ENCODE measurements at regions of chr12 and their contacts with region 1.

Region 1: DNA sequence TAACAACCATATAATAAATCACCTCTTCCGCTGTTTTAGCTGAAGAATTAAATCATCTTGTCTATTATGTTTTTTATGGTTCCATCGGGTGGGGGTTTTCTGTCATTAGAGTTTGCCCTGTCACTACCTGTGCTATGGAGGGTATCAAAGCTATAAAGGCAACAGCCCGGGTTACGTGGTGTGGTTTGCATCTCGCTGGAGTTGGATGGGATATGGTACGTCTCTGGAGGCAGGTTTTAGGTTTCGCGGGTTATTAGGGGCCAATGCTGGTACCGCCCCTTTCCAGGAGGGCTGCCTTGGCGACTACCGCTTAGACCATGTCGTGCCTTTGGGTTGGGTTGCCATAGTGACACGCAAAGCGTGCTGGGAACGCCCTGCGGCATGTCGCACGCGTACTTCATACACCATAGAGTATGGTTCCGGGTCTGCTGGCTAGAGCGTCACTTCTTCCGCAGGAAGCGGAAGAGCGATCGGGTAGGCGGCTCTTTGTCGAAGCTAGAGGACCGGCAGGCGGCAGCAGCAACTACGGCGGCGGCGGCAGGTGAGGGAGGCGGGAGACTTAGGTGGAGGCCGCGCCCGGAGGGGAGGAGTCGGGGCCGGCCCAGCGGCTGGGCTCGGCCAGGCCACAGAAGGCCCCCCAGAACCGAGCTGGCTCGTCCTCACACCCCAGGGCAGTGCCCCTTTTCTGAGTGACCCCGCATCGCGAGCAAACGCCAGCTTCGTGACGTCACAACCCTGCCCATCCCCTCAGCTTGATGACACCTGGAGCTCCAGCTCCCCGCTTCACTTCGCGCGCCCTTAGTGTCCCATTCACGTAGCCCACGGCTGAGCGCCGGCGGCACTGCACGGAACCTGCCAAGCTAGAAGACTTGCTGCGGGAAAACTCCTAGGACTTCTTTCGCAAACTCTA is at the start of gene ZC3H10:
- DNase-seq: peak; percentile 97
- H3K4me3 ChIP-seq: peak within 1 kb of the TSS; percentile 61
- H3K27ac ChIP-seq: peak within 1 kb of the TSS; percentile 93 to 97
- H3K4me1 ChIP-seq: peaks cover 8% of the 10 kb centered on the region
- H3K27me3 ChIP-seq: no peaks in the 10 kb centered on the region
- CTCF ChIP-seq: peak; percentile 45 to 94 (median 72)
- POLR2A ChIP-seq: peak; percentile 88
- total RNA-seq, gene ZC3H10: 4.6 to 9.1 TPM

Region 2: GRCh38 chr12:55955800-55956508 is 162.1 kb before region 1 on chr12:
- intact Hi-C with region 1: no loop called
- DNase-seq: peak; percentile 58
- H3K4me3 ChIP-seq: no peak overlapping the region
- H3K27ac ChIP-seq: no peak overlapping the region
- H3K4me1 ChIP-seq: no peaks in the 10 kb centered on the region
- H3K27me3 ChIP-seq: no peaks in the 10 kb centered on the region
- CTCF ChIP-seq: peak in 2 of 4 experiments; percentile 40 to 64
- POLR2A ChIP-seq: no peak

Region 3: GRCh38 chr12:56158029-56158925 is 40.2 kb after region 1 on chr12 and contains the start of gene MYL6:
- intact Hi-C with region 1: loop called (anchors 5 kb)
- DNase-seq: peak; percentile 99
- H3K4me3 ChIP-seq: peak within 1 kb of the TSS; percentile 58 to 71
- H3K27ac ChIP-seq: peak within 1 kb of the TSS; percentile 97 to 98
- H3K4me1 ChIP-seq: peaks cover 12% of the 10 kb centered on the region
- H3K27me3 ChIP-seq: no peaks in the 10 kb centered on the region
- CTCF ChIP-seq: peak in 1 of 4 experiments; percentile 18
- POLR2A ChIP-seq: peak; percentile 100
- total RNA-seq, gene MYL6: 1,587 to 1,792 TPM

Region 4: GRCh38 chr12:56224102-56224701 is 106.2 kb after region 1 on chr12 and contains the start of gene NABP2:
- intact Hi-C with region 1: loop called (anchors 2 kb)
- DNase-seq: peak; percentile 98
- H3K4me3 ChIP-seq: peak within 1 kb of the TSS; percentile 46 to 47
- H3K27ac ChIP-seq: peak within 1 kb of the TSS; percentile 75 to 99
- H3K4me1 ChIP-seq: no peaks in the 10 kb centered on the region
- H3K27me3 ChIP-seq: no peaks in the 10 kb centered on the region
- CTCF ChIP-seq: peak; percentile 82 to 99 (median 96)
- POLR2A ChIP-seq: peak; percentile 42
- total RNA-seq, gene NABP2: 21.4 to 33.2 TPM

Region 5: DNA sequence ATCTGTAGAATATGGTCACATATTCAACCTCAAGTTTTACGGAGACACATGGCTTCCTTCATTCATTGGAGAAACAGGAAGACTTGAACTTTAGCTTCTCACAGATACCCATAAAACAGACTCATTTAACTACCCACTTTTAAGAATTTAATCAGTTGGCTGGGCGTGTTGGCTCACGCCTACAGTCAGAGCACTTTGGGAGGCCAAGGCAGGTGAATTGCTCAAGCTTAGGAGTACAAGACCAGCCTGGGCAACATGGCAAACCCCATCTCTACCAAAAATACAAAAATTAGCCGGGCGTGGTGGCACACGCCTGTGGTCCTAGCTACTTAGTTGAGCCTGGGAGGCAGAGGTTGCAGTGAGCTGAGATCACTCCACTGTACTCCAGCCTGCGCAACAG is 1197.6 kb after region 1 on chr12:
- intact Hi-C with region 1: no loop called
- DNase-seq: no peak
- H3K4me3 ChIP-seq: no peak overlapping the region
- H3K27ac ChIP-seq: peak overlapping the region in 1 of 2 donors; percentile 31
- H3K4me1 ChIP-seq: no peaks in the 10 kb centered on the region
- H3K27me3 ChIP-seq: no peaks in the 10 kb centered on the region
- CTCF ChIP-seq: no peak
- POLR2A ChIP-seq: no peak

Measured in prostate gland (tissue), 2 donors.